HEK293 (cell line): ENCODE measurements at regions of chr6 and their contacts with region 1.

Region 1: DNA sequence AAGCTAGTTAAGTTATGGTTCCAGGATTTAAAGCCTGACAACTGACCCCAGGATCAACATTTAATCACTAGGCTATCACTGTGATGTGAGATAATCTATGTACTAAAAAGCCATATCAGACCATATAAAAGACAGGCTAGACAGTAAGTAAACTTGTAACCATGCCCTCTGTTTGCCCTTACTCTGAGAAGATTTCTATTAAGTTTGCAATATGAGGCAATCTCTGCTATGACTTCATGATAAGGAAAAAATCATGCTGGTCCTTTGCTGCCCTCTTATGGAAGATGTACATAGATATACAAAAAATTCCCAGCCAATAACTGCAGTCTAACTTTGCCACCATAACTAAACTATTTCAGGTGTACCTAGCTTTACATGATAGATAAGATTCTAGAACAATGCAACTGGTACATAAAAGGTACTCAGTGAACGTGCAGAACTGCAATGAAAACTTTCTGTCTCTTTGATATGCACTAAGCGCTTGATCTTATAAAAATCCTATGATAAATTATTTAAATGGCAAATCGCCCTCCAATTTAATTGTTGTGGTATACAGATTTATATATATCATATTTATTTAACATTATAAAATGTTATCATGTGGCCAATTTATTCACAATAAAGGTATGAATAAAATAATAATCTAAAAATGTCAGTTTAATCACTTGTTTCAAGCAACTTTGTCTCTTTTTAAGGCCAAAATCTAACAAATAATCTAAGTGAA is 70.5 kb downstream of the FAM217A start:
- H3K4me3 ChIP-seq: no peak overlapping the region
- H3K27ac ChIP-seq: no peak overlapping the region
- H3K4me1 ChIP-seq: peaks cover 12% of the 10 kb centered on the region
- CTCF ChIP-seq: peak; percentile 32; the same call in 1 of the 2 replicates

Region 2: GRCh38 chr6:3742426-3743344 is 265.8 kb before region 1 on chr6:
- CTCF ChIA-PET with region 1: interaction called, 25 read pairs
- POLR2A ChIA-PET with region 1: no interaction called
- H3K4me3 ChIP-seq: no peak overlapping the region
- H3K27ac ChIP-seq: no peak overlapping the region
- H3K4me1 ChIP-seq: peaks cover 6% of the 10 kb centered on the region; the same call in 1 of the 2 replicates
- CTCF ChIP-seq: peak; percentile 79

Region 3: GRCh38 chr6:3990692-3991501 is 17.6 kb before region 1 on chr6:
- CTCF ChIA-PET with region 1: interaction called, 22 read pairs
- POLR2A ChIA-PET with region 1: interaction called, 8 read pairs
- H3K4me3 ChIP-seq: no peak overlapping the region
- H3K27ac ChIP-seq: no peak overlapping the region; the same call in 1 of the 2 replicates
- H3K4me1 ChIP-seq: no peaks in the 10 kb centered on the region
- CTCF ChIP-seq: peak; percentile 94

Region 4: DNA sequence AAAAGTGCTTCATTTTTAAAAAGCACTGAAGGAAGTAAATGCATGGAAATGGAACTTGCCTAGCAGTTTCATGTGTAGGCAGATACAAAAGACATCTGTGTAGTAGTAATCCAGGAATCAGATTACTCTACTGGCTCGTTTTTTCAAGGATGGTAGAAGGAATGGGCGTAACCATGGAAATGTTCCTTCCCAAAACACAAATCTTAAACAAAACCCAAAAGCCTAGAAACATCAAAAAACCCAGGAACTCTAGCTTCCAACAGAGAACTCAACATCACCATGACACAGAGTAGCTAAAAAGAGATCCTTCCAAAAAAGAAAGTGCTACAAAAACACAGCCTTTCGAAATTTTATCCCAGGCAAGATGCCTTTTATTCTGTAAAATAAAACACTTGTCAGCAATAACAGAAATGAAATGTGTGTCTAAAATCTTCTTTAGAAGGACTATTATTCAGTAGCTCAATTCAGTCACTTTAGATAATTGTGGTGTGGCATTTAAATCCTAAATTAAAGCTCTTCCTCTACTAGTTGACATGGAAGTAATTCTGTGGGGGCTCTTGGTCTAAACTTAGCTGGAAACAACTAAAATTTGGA is 11.2 kb before region 1 on chr6:
- CTCF ChIA-PET with region 1: interaction called, 26 read pairs
- POLR2A ChIA-PET with region 1: no interaction called
- H3K4me3 ChIP-seq: no peak overlapping the region
- H3K27ac ChIP-seq: no peak overlapping the region
- H3K4me1 ChIP-seq: peaks cover 11% of the 10 kb centered on the region
- CTCF ChIP-seq: no peak